IMR-90 (cell line): ENCODE measurements at regions of chr2 and their contacts with region 1.

Region 1: DNA sequence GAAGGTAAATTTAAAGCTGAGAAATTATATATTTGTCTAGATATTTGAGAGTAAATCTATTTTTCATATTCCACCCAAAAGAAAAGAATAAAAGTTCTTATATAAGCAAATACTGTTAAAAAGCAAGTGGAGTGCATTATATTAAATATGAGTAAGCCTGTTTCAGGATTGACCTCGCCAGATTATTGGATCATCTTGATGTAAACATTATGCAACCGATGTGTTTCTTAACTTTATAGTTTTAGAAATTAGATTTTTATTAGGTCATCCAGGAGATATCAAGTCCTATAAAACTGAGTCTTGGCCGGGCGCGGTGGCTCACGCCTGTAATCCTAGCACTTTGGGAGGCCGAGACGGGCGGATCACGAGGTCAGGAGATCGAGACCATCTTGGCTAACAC is 100.3 kb upstream of the MSTN start:
- DNase-seq: no peak
- ATAC-seq: no peak
- H3K4me3 ChIP-seq: no peak overlapping the region
- H3K27ac ChIP-seq: no peak overlapping the region
- H3K4me1 ChIP-seq: no peaks in the 10 kb centered on the region
- H3K27me3 ChIP-seq: no peaks in the 10 kb centered on the region
- CTCF ChIP-seq: no peak
- POLR2A ChIP-seq: no peak
- RAD21 ChIP-seq: no peak

Region 2: GRCh38 chr2:190126798-190127197 is 36.1 kb before region 1 on chr2:
- CTCF ChIA-PET with region 1: interaction called, 3 read pairs
- POLR2A ChIA-PET with region 1: no interaction called
- dilution Hi-C with region 1: no loop called
- in situ Hi-C with region 1: no loop called
- intact Hi-C with region 1: loop called (anchors 5 kb)
- DNase-seq: peak; percentile 42
- ATAC-seq: peak; percentile 48
- H3K4me3 ChIP-seq: no peak overlapping the region
- H3K27ac ChIP-seq: no peak overlapping the region; the same call in 1 of the 2 replicates
- H3K4me1 ChIP-seq: no peaks in the 10 kb centered on the region; the same call in 1 of the 2 replicates
- H3K27me3 ChIP-seq: no peaks in the 10 kb centered on the region
- CTCF ChIP-seq: no peak
- POLR2A ChIP-seq: no peak
- RAD21 ChIP-seq: no peak